Ascending aorta (tissue), 2 donors: ENCODE measurements at regions of chr16 and their contacts with region 1.

Region 1: GRCh38 chr16:20799599-20799998 is 6.7 kb downstream of the ERI2 start:
- DNase-seq: no peak
- H3K4me3 ChIP-seq: no peak overlapping the region
- H3K27ac ChIP-seq: peak overlapping the region in 1 of 2 donors; percentile 28
- H3K4me1 ChIP-seq: peaks cover 0 to 2% of the 10 kb centered on the region in 2 donors
- H3K27me3 ChIP-seq: no peaks in the 10 kb centered on the region
- CTCF ChIP-seq: peak in 2 of 3 experiments; percentile 53 to 60

Region 2: GRCh38 chr16:20814784-20815183 is 15.2 kb after region 1 on chr16:
- intact Hi-C with region 1: no loop called
- DNase-seq: no peak
- H3K4me3 ChIP-seq: no peak overlapping the region
- H3K27ac ChIP-seq: no peak overlapping the region
- H3K4me1 ChIP-seq: no peaks in the 10 kb centered on the region
- H3K27me3 ChIP-seq: no peaks in the 10 kb centered on the region
- CTCF ChIP-seq: no peak

Region 3: GRCh38 chr16:20987049-20987448 is 187.4 kb after region 1 on chr16:
- intact Hi-C with region 1: no loop called
- DNase-seq: no peak
- H3K4me3 ChIP-seq: no peak overlapping the region
- H3K27ac ChIP-seq: no peak overlapping the region
- H3K4me1 ChIP-seq: no peaks in the 10 kb centered on the region
- H3K27me3 ChIP-seq: no peaks in the 10 kb centered on the region
- CTCF ChIP-seq: no peak

Region 4: DNA sequence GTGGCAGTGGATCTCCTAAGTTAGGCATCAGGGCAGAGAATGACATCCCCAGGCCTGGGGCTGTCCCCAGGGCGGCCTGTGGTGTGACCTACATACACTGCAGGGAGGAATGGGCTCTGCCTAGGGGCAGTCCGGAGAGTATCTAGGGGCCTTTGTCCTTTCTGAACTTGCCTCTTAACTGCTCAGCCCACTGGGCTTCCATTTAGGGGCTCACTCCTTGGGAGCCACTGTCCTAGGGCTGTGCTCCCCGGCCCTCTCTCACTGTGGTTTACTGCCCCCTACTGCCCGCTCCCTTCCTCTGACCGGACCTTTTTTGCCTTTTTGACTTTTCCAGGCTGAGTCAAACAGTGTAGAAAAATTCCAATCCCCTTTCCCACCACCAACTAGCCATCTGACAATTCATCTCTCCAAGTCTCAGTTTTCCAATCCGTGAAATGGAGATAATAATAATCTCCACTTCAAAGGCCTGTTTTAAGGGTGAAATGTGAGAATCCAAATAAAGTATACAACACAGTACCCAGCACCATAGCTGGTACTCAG is 284.2 kb after region 1 on chr16:
- intact Hi-C with region 1: loop called (anchors 1 kb)
- DNase-seq: peak in 1 of 2 donors; percentile 68
- H3K4me3 ChIP-seq: no peak overlapping the region
- H3K27ac ChIP-seq: no peak overlapping the region
- H3K4me1 ChIP-seq: peaks cover 0 to 3% of the 10 kb centered on the region in 2 donors
- H3K27me3 ChIP-seq: no peaks in the 10 kb centered on the region
- CTCF ChIP-seq: peak; percentile 60 to 77 (median 62)